ENCODE measurements at regions of chr1 and their contacts with region 1.

Region 1: DNA sequence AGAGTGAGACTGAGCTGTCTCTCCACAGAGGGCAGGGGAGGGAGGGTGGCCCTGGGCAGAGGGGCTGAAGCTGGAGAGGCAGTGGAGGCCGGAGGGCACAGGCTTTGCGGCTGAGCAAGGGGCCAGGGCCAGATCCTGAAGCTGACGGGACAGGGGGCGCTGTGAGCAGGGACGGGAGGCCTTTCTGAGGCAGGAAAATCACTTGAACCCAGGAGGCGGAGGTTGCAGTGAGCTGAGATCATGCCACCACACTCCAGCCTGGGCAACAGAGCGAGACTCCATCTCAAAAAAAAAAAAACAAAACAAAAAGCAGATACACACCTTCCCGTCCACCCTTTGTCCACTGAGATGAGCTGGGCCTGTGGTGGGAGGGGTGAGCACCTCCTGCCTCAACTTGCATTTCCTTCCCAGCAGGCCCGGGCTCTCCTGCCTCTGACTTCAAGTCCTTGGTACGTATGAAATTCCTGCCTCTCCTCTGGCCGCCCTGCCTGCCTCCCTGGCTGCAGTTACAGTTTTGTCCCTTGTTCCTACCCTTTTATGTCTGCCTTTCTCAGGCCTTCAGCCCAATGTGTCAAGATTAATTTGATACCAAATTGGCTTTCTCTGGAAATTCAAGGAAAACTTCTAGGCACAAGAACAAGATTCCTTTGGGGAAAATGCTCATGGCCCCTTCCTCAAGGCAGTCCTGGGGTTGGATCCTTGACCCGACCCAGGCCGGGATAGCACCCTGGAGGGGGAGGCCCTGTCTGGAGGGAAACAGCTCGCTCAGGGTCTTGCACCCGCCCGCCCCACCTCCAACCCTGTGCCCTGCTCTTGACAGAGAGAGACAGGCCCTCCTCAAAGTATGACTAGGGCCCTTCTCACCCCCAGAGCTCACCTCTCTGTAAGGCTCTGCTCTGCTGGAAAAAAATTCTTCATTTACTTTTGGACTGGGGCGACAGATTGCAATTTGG is 11.2 kb upstream of the ADAMTSL4 start:
- DNase-seq: no peak
- CTCF ChIP-seq: no peak

Region 2: GRCh38 chr1:150548632-150549495 is 10.9 kb after region 1 on chr1 and contains the start of gene ADAMTSL4:
- CTCF ChIA-PET with region 1: interaction called, 47 read pairs
- POLR2A ChIA-PET with region 1: no interaction called
- DNase-seq: peak; percentile 70
- CTCF ChIP-seq: no peak

Measured in GM10248 (cell line).